Heart left ventricle (tissue), 16 donors: ENCODE measurements at regions of chr15 and their contacts with region 1.

Region 1: GRCh38 chr15:72068856-72069255 is 49.1 kb downstream of the MYO9A start:
- DNase-seq: no peak
- ATAC-seq: no peak
- H3K4me3 ChIP-seq: no peak overlapping the region
- H3K27ac ChIP-seq: no peak overlapping the region
- H3K4me1 ChIP-seq: peaks cover 0 to 3% (median 0%) of the 10 kb centered on the region in 12 donors
- H3K27me3 ChIP-seq: no peaks in the 10 kb centered on the region
- CTCF ChIP-seq: no peak
- POLR2A ChIP-seq: no peak

Region 2: GRCh38 chr15:71883447-71883846 is 185.4 kb before region 1 on chr15:
- intact Hi-C with region 1: no loop called
- DNase-seq: no peak
- ATAC-seq: no peak
- H3K4me3 ChIP-seq: no peak overlapping the region
- H3K27ac ChIP-seq: no peak overlapping the region
- H3K4me1 ChIP-seq: no peaks in the 10 kb centered on the region
- H3K27me3 ChIP-seq: no peaks in the 10 kb centered on the region
- CTCF ChIP-seq: no peak
- POLR2A ChIP-seq: no peak

Region 3: DNA sequence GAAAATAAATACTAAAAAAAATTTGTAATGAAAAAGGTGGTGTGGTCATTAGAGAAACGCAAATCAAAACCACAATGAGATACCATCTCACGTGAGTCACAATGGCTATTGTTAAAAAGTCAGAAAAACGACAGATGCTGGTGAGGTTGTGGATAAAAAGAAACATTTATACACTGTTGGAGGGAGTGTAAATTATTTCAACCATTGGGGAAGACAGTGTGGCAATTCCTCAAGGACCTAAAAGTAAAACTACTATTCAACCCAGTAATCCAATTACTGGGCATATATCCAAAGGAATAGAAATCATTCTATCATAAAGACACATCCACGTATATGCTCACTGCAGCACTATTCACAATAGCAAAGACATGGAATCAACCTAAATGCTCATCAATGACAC is 71.2 kb before region 1 on chr15:
- intact Hi-C with region 1: loop called in 1 of 10 experiments (anchors 2 kb)
- DNase-seq: no peak
- ATAC-seq: no peak
- H3K4me3 ChIP-seq: no peak overlapping the region
- H3K27ac ChIP-seq: no peak overlapping the region
- H3K4me1 ChIP-seq: no peaks in the 10 kb centered on the region
- H3K27me3 ChIP-seq: no peaks in the 10 kb centered on the region
- CTCF ChIP-seq: no peak
- POLR2A ChIP-seq: no peak